ENCODE measurements at regions of chr10 and their contacts with region 1.

Region 1: DNA sequence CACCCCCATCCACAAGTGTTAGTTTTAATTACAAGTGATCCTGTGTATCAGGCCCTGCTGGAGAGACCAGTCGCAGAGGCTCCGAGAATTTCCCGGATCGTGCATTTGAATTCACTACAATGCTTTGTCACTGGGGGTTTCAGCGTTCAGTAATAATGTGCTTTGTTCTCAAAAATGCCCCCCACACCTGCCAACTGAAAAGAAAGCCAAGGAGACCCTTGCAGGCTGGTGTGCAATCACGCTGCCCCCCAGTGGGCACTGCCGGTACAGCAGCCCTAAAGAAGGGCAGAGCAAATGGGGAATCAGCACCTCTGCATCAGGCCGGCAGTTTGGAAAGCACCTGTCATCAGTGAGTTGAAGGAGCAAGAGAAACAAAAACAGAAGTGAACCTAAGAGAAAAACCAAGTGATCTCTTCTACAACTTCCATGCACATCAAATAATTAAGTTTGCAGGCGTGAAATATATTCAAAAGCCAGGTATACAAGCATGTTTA is 177.6 kb downstream of the PARD3 start:
- DNase-seq: peak in 1 of 2 donors; percentile 78
- H3K4me3 ChIP-seq: no peak overlapping the region
- H3K27ac ChIP-seq: no peak overlapping the region
- H3K4me1 ChIP-seq: peaks cover 0 to 11% of the 10 kb centered on the region in 2 donors
- H3K27me3 ChIP-seq: no peaks in the 10 kb centered on the region
- CTCF ChIP-seq: peak; percentile 86 to 96 (median 95)

Region 2: DNA sequence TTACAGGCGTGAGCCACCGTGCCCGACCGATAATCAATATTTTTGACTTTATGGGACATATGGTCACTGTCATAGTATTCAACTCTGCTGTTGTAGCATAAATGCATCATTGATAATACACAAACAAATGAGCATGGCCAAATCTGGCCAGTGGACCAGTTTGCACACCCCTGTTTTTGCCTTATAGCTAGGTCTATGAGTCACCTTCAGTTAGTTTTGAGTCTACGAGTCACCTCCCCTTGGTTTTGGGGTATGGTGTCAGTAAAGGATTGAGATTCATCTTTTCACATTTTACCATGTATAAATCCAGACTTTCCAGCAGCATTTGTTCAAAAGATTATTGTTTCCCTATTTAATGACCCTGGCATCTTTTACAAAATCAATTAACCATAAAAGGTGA is 940.4 kb before region 1 on chr10:
- intact Hi-C with region 1: no loop called
- DNase-seq: no peak
- H3K4me3 ChIP-seq: no peak overlapping the region
- H3K27ac ChIP-seq: no peak overlapping the region
- H3K4me1 ChIP-seq: no peaks in the 10 kb centered on the region
- H3K27me3 ChIP-seq: no peaks in the 10 kb centered on the region
- CTCF ChIP-seq: no peak

Region 3: GRCh38 chr10:34434119-34434594 is 203.3 kb before region 1 on chr10:
- intact Hi-C with region 1: loop called (anchors 10 kb)
- DNase-seq: no peak
- H3K4me3 ChIP-seq: no peak overlapping the region
- H3K27ac ChIP-seq: no peak overlapping the region
- H3K4me1 ChIP-seq: no peaks in the 10 kb centered on the region
- H3K27me3 ChIP-seq: no peaks in the 10 kb centered on the region
- CTCF ChIP-seq: no peak

Region 4: DNA sequence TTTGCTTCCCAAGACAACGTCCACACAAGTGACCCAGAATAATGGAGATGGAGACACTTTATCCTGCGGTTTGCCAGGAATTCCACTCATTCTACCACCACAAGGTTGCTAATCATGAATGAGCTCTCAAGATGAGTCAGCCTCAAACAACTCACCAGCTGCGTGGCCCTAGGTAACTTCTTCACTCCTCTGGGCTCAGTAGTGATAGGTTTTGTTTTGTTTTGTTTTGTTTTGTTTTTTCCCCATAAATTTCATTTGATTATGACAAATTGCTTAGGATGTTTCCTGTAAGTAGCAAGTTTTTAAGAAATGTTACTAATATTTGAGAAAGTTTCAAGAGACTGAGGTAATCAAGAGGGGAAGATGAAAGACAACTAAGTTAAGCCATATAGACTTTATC is 109.1 kb before region 1 on chr10:
- intact Hi-C with region 1: loop called (anchors 5 kb)
- DNase-seq: no peak
- H3K4me3 ChIP-seq: no peak overlapping the region
- H3K27ac ChIP-seq: no peak overlapping the region
- H3K4me1 ChIP-seq: peaks cover 10 to 21% of the 10 kb centered on the region in 2 donors
- H3K27me3 ChIP-seq: no peaks in the 10 kb centered on the region
- CTCF ChIP-seq: no peak

Region 5: GRCh38 chr10:35040760-35041501 is 403.5 kb after region 1 on chr10:
- intact Hi-C with region 1: no loop called
- DNase-seq: no peak
- H3K4me3 ChIP-seq: no peak overlapping the region
- H3K27ac ChIP-seq: no peak overlapping the region
- H3K4me1 ChIP-seq: no peaks in the 10 kb centered on the region
- H3K27me3 ChIP-seq: no peaks in the 10 kb centered on the region
- CTCF ChIP-seq: no peak

Measured in ascending aorta (tissue), 2 donors.